Mammary epithelial cell (primary cell): ENCODE measurements at regions of chr5 and their contacts with region 1.

Region 1: GRCh38 chr5:21236971-21237427 is 1249.0 kb upstream of the CDH18 start:
- DNase-seq: peak; percentile 79
- H3K4me3 ChIP-seq: no peak overlapping the region
- H3K27ac ChIP-seq: peak overlapping the region; percentile 65
- H3K4me1 ChIP-seq: peaks cover 15% of the 10 kb centered on the region
- H3K27me3 ChIP-seq: no peaks in the 10 kb centered on the region
- CTCF ChIP-seq: no peak

Region 2: DNA sequence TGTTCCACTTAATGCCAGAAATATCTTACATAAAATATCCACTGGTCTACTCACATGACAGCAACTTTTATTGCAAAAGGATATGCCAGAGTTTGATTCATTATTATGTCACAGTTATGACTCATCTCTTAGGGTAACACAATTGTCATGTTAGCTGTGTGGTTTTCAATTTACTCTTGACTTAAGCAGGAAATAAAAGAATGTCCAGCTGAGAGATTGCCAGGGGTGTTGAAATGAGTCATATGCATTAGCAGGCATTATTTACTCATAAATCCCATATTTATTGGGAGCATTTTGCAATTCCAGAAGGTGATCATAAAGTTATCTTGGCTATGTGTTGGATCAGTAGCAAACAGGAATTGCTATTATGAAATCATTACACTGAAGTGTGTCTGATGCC is 84.4 kb before region 1 on chr5:
- CTCF ChIA-PET with region 1: no interaction called
- dilution Hi-C with region 1: no loop called
- in situ Hi-C with region 1: no loop called
- intact Hi-C with region 1: loop called (anchors 5 kb)
- DNase-seq: peak; percentile 95
- H3K4me3 ChIP-seq: no peak overlapping the region
- H3K27ac ChIP-seq: no peak overlapping the region
- H3K4me1 ChIP-seq: peaks cover 7% of the 10 kb centered on the region
- H3K27me3 ChIP-seq: no peaks in the 10 kb centered on the region
- CTCF ChIP-seq: no peak